Activated CD4-positive, alpha-beta T cell treated with anti-CD3 and anti-CD28 coated beads for 36 hours (primary cell): ENCODE measurements at regions of chr19 and their contacts with region 1.

Region 1: DNA sequence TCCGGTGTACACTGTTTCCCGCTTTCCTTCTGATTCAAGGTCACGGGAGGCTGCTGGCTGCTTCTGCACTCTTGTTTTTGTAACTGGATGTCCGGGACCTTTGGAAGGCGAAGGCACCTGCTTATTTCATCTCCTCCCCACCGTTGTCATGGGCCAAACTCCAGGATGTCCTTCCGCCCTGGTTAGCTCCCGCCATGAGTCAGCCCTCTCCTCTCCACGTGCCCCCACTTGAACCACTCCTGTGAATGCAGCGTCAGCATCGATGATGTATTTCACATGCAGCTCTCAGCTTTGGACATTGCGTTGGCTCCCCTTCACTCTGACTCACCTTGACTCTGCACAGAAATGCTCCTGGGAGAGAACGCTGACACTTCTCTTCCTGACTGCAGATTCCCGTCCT is 5.5 kb upstream of the GALP start:
- DNase-seq: no peak
- ATAC-seq: no peak
- H3K4me3 Mint-ChIP-seq: no peak overlapping the region
- H3K27ac Mint-ChIP-seq: no peak overlapping the region
- H3K4me1 Mint-ChIP-seq: peaks cover 3% of the 10 kb centered on the region
- H3K27me3 Mint-ChIP-seq: no peaks in the 10 kb centered on the region

Region 2: GRCh38 chr19:56105090-56105701 is 65.1 kb before region 1 on chr19:
- CTCF ChIA-PET with region 1: interaction called, 4 read pairs
- POLR2A ChIA-PET with region 1: no interaction called
- intact Hi-C with region 1: loop called (anchors 1 kb)
- DNase-seq: peak; percentile 74
- ATAC-seq: peak; percentile 82
- H3K4me3 Mint-ChIP-seq: no peak overlapping the region
- H3K27ac Mint-ChIP-seq: peak overlapping the region; percentile 25
- H3K4me1 Mint-ChIP-seq: peaks cover 27% of the 10 kb centered on the region
- H3K27me3 Mint-ChIP-seq: no peaks in the 10 kb centered on the region